ENCODE measurements at regions of chr3 and their contacts with region 1.

Region 1: DNA sequence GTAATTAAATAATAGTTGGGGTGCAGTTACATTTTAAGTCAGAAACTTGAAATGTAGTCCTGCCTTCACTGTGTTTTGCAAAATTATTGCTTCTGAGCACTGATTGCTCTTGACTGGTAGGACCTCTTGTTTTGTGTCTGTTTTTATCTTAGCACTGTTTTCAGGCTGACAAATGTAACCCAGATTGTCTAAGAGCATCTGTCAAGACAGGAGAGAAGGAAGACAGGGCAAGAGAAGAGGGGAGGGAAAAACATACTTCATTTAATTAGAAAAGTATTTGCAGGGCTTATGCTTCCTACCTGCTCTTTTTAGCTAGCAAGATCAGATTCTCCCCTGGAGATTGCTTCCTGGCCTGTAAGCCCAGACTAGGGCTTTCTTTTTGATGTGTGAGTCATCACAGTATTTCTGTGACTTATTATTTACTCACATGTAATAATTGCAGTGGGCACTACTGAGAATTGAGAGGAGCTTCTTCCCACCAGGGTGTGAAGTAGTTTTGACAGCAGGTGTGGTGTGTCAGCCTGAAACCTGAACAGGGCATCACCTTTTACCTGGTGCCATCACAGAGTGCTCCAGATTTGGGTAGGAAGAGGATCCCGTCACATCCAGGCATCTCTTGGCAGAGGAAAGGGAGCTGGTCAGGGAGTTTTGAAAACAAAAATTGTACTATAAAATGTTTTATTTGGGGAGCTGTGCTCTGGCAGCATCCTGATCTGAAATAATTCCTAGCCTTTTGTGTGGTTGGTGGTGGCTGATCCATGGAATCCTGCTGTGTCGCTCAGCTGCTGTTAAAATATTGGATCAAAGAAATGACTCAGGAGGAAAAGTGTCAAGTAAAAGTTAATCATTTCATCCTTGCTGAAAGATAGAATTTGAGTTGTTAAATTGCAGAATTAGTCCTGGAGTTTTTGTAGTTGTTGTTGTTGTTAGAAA is 98.2 kb downstream of the TMEM108 start:
- DNase-seq: no peak
- H3K4me3 ChIP-seq: no peak overlapping the region
- CTCF ChIP-seq: no peak
- POLR2A ChIP-seq: no peak

Region 2: GRCh38 chr3:133096900-133097613 is 39.3 kb before region 1 on chr3:
- intact Hi-C with region 1: loop called (anchors 1 kb)
- DNase-seq: no peak
- H3K4me3 ChIP-seq: no peak overlapping the region
- CTCF ChIP-seq: no peak
- POLR2A ChIP-seq: no peak

Measured in lower leg skin (tissue), 4 donors.